ENCODE measurements at regions of chr3 and their contacts with region 1.

Region 1: DNA sequence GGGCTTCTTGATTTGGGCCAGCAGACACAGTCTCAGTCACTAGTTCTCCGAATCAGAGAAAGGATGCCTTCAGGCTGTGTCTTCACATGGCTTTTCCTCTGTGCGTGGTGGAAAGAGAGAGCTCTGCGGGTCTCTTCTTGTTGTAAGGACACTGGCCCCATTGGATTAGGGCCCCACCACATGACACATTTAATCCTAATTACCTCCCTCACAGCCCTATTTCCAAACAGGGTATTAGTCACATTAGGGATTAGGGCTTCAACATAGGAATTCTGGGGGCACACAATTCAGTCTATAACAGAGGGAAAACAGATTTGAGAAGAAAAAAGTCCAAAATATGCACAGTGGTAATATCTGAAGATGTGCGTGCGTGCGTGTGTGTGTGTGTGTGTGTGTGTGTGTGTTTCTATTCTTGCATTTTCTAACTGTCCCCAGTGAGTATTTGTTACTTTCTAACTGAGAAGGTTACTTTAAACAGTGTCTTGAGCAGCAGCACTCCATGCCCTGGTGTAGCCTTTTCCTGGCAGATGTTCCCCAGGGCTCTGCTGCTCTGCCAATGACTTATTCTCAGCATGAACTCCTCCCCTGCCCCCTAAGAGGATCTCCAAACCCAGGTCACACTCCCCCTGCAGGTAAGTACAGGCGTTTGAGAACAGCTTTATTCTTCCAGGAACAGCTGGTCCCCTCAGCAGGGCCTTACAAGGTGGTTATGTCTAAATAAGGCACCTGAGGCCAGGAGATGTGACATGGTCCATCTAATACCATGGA is 72.9 kb downstream of the RPL39L start:
- DNase-seq: no peak
- ATAC-seq: peak; percentile 36 to 42
- H3K4me3 ChIP-seq: no peak overlapping the region
- H3K27ac ChIP-seq: no peak overlapping the region
- H3K4me1 ChIP-seq: no peaks in the 10 kb centered on the region
- H3K27me3 ChIP-seq: no peaks in the 10 kb centered on the region

Region 2: DNA sequence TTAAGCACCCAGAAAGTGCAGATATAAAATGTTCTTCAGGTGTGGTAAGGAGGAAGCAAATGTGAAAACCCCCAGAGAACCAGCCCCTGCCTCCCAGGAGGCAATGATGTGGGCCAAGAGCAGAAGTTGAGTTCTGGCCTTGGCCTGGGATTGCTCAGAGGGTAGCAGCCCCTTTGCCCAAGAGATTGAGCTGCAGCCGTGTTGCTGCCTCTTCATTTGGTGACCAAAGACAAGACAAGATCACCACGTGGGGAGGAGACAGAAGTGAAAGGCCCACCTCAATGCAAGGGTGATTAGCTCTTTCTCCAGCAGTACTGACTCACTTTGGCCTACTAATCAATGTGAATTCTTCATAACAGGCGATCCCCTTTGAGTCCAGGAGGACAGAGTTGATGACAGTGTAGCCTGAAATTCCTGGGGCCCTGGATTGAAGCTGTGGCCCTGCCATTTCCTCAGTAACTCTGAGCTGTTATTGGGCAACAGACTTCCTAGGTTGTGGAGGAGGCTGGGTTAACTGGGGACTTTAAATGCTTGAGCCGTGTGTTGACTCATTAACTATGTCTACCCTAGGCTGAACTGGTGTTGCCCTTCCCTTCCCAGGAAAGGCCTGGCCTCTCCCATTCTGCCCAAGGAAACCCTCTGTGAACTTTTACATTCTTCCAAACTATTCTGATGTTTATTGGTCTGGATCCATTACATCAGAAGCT is 49.6 kb before region 1 on chr3:
- intact Hi-C with region 1: loop called in 1 of 4 experiments (anchors 5 kb)
- DNase-seq: peak in 1 of 3 donors; percentile 26
- ATAC-seq: peak; percentile 67 to 88
- H3K4me3 ChIP-seq: no peak overlapping the region
- H3K27ac ChIP-seq: no peak overlapping the region
- H3K4me1 ChIP-seq: peaks cover 19% of the 10 kb centered on the region
- H3K27me3 ChIP-seq: no peaks in the 10 kb centered on the region

Measured in right cardiac atrium (tissue), 5 donors.